Endothelial cell of umbilical vein (primary cell): ENCODE measurements at regions of chr15 and their contacts with region 1.

Region 1: DNA sequence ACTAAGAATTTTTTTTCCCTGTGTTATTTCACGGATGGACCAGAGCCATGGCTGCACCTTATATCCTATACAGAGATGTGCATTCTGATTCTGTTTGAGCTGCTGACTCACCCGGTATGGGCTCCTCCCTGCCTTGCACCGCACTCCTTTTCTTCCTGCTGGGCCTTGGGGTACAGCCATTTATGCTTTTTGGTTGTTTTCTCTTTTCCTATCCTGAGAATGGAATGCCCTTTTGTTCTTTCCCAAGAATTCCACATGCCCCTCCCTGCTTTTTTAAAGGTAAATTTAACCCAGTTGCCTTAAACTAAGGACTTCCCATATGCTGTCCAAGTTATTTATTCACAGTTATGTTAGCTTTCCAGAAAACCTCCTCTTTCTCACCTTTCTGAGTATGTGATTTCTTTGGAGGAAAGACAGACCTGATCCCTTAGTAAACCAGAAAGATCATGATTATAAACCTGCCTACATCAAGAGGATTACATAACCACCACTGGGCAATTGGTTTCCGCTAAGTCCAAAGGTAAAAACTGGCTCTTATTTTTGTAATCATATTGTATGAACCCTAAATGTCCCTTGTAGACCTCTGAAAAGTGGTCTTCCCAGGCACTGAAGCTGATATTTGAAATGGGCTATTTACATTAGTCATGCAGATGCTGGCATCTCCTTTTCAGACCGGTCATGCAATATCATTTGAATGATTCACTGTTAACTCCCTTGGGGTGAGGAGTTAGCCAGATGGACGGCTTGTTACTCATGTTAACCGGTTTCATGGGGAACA is 45.5 kb downstream of the TMOD3 start:
- DNase-seq: peak; percentile 92
- H3K4me3 ChIP-seq: no peak overlapping the region
- H3K27ac ChIP-seq: peak overlapping the region; percentile 98
- H3K4me1 ChIP-seq: peaks cover 42% of the 10 kb centered on the region
- H3K27me3 ChIP-seq: no peaks in the 10 kb centered on the region
- CTCF ChIP-seq: no peak
- POLR2A ChIP-seq: no peak

Region 2: GRCh38 chr15:51801391-51801835 is 73.5 kb before region 1 on chr15:
- CTCF ChIA-PET with region 1: interaction called, 3 read pairs
- POLR2A ChIA-PET with region 1: no interaction called
- dilution Hi-C with region 1: no loop called
- intact Hi-C with region 1: loop called (anchors 5 kb)
- DNase-seq: peak; percentile 68
- H3K4me3 ChIP-seq: no peak overlapping the region
- H3K27ac ChIP-seq: no peak overlapping the region
- H3K4me1 ChIP-seq: no peaks in the 10 kb centered on the region
- H3K27me3 ChIP-seq: no peaks in the 10 kb centered on the region
- CTCF ChIP-seq: peak; percentile 71 to 87
- POLR2A ChIP-seq: no peak

Region 3: GRCh38 chr15:51829360-51830275 is 45.3 kb before region 1 on chr15 and contains the start of gene TMOD3:
- CTCF ChIA-PET with region 1: interaction called, 3 read pairs
- POLR2A ChIA-PET with region 1: no interaction called
- dilution Hi-C with region 1: no loop called
- intact Hi-C with region 1: loop called (anchors 1 kb)
- DNase-seq: peak; percentile 94
- H3K4me3 ChIP-seq: peak within 1 kb of the TSS; percentile 88 to 97 (median 90)
- H3K27ac ChIP-seq: peak within 1 kb of the TSS; percentile 88
- H3K4me1 ChIP-seq: peaks cover 12% of the 10 kb centered on the region
- H3K27me3 ChIP-seq: no peaks in the 10 kb centered on the region
- CTCF ChIP-seq: peak in 1 of 2 donors; percentile 1
- POLR2A ChIP-seq: peak; percentile 91
- total RNA-seq, gene TMOD3: 63.7 and 64.3 TPM in 2 replicates

Region 4: DNA sequence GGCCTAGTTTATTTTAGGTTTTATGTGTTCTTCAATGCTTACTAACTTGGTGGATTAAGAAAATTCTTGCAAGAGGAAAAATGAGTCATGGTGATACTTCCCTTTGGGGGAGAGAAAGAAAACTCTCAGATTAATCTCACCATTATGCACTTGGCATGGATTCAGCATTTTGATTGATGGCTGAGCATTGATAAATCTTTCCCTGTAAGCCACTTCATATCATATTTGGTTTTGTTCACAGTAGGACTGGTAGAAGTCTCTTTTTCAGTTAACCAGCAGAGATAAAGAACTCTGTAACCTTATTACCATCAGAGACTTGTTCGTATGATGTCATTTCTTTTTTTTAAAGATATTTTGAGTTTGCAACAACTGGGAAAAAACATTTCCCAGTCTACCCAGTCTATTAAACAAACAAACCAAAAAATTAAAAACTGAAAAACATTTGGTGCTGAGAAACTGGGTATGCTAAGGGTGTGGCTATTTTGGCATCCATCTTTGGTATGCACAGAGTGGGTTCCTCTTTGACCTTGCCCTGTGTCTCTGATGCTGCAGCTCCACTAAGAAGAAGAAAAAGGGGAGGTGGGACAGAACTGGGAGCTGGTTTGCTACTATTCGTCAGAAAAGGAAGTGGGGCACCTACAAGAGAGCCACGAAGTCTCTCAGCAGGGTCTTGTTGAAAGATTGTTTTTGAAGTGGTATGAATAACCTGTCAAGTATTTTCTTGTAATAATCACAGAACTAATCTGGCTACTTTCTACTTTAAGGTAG is 28.3 kb before region 1 on chr15:
- CTCF ChIA-PET with region 1: interaction called, 7 read pairs
- POLR2A ChIA-PET with region 1: no interaction called
- dilution Hi-C with region 1: no loop called
- intact Hi-C with region 1: loop called (anchors 1 kb)
- DNase-seq: peak; percentile 97
- H3K4me3 ChIP-seq: peak overlapping the region in 1 of 3 experiments; percentile 24
- H3K27ac ChIP-seq: peak overlapping the region; percentile 93
- H3K4me1 ChIP-seq: peaks cover 71% of the 10 kb centered on the region
- H3K27me3 ChIP-seq: no peaks in the 10 kb centered on the region
- CTCF ChIP-seq: no peak
- POLR2A ChIP-seq: no peak

Region 5: GRCh38 chr15:51888593-51889195 is 13.8 kb after region 1 on chr15:
- CTCF ChIA-PET with region 1: interaction called, 23 read pairs
- POLR2A ChIA-PET with region 1: no interaction called
- dilution Hi-C with region 1: no loop called
- intact Hi-C with region 1: no loop called
- DNase-seq: peak; percentile 43
- H3K4me3 ChIP-seq: no peak overlapping the region
- H3K27ac ChIP-seq: no peak overlapping the region
- H3K4me1 ChIP-seq: peaks cover 9% of the 10 kb centered on the region
- H3K27me3 ChIP-seq: no peaks in the 10 kb centered on the region
- CTCF ChIP-seq: peak; percentile 44 to 48
- POLR2A ChIP-seq: no peak

Region 6: DNA sequence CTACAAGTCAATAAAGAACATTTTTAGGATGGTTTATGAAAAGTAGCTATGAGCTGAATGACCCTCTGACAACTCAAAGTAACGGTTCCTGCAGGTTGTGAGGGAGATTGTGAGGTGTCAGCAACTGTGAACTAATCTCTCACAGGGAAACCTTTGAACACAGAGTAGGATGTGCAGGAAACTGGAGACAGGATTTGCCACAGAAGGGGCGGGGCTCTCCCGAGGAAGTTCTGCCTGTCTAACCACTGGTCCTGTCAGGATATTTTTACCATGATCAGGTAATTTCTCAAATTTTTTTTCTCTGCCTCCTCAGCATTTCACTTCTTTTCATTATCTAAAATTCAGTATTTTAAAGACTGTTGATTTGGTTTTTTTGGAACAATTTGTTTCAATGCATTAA is 63.3 kb after region 1 on chr15:
- CTCF ChIA-PET with region 1: no interaction called
- POLR2A ChIA-PET with region 1: no interaction called
- dilution Hi-C with region 1: no loop called
- intact Hi-C with region 1: no loop called
- DNase-seq: no peak
- H3K4me3 ChIP-seq: no peak overlapping the region
- H3K27ac ChIP-seq: no peak overlapping the region
- H3K4me1 ChIP-seq: peaks cover 6% of the 10 kb centered on the region
- H3K27me3 ChIP-seq: no peaks in the 10 kb centered on the region
- CTCF ChIP-seq: no peak
- POLR2A ChIP-seq: no peak

Region 7: DNA sequence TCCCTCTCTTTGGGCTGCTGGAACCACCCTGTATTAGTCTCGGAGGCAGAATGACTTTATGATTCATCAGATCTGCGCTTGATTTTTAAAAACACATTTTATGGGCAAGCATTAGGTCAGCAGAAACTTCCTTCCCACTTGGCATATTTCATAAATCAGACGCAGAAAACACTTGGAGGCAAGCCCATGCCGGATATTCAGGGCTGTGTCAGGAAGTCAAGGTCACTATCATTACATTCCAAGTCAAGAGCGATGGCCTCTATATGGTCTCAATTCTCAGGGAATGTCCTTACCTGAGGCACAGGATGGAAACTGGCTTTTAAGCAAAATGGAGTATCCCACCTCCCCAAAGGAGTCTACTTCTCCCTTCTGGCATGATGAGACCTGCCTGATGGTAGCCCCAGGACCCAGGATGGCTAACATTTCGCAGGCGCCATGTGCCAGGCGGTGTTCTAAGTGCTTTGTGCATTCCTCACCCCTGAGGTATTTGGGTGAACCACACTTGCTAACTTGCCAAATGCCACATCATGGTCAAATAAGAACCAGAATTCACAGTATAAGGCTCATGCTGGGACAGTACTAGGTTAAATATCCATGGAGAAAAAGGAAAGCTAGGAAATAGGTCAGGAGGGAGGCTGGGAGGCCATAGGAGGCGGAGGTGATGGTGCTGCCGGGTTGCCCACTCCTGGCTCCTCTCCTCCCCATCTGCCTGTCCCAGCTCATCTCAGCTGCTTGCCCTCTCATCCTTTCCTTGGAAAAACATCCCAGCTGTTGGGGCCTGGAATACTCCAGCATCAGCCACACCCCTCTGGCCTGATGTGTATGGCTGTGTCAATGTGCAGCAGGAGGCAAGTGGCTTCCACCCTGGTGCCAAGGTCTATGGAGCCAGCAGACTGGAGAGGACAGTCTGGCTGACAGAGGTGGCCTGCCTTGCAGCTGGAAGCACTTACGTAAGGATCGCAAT is 218.9 kb after region 1 on chr15:
- CTCF ChIA-PET with region 1: no interaction called
- POLR2A ChIA-PET with region 1: no interaction called
- dilution Hi-C with region 1: no loop called
- intact Hi-C with region 1: loop called (anchors 1 kb)
- DNase-seq: peak; percentile 99
- H3K4me3 ChIP-seq: peak overlapping the region in 1 of 3 experiments; percentile 14
- H3K27ac ChIP-seq: peak overlapping the region; percentile 99
- H3K4me1 ChIP-seq: peaks cover 34% of the 10 kb centered on the region
- H3K27me3 ChIP-seq: no peaks in the 10 kb centered on the region
- CTCF ChIP-seq: no peak
- POLR2A ChIP-seq: peak; percentile 69

Region 8: GRCh38 chr15:52491472-52491871 is 616.5 kb after region 1 on chr15:
- CTCF ChIA-PET with region 1: no interaction called
- POLR2A ChIA-PET with region 1: no interaction called
- dilution Hi-C with region 1: no loop called
- intact Hi-C with region 1: loop called (anchors 5 kb)
- DNase-seq: peak; percentile 95
- H3K4me3 ChIP-seq: peak overlapping the region in 1 of 3 experiments; percentile 40
- H3K27ac ChIP-seq: peak overlapping the region; percentile 97
- H3K4me1 ChIP-seq: peaks cover 75% of the 10 kb centered on the region
- H3K27me3 ChIP-seq: no peaks in the 10 kb centered on the region
- CTCF ChIP-seq: no peak
- POLR2A ChIP-seq: no peak